ENCODE measurements at regions of chr3 and their contacts with region 1.

Region 1: DNA sequence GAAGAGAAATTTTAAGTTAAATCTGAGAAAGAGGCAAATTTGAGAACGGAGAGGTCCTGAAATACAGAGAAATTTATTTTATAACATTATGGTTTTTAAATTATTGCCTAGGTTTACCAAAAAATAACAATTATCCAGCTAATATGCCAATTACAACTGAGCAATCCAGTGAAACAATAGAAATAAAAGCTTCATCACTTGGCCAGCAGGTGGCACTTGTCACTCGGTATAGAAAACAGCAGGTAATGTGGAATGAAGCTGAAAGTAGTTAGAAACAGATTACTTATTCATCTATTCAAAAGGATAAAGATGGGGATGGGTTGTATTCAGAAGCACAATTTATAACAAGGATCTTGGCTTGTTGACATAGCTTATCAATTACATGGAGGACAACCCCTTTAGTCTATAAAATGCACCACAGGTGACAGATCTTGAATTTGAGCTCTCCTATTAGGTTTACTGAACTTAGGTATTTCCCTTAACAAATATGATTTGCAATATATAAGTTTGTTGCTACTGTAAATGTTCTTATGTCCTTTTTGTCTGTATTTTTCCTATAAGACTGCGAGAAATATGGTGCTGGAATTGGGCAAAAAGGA is 70.1 kb upstream of the GUCA1C start:
- DNase-seq: peak; percentile 57
- ATAC-seq: peak; percentile 28
- H3K4me3 ChIP-seq: no peak overlapping the region
- H3K4me3 Mint-ChIP-seq: no peak overlapping the region
- H3K27ac ChIP-seq: no peak overlapping the region
- H3K27ac Mint-ChIP-seq: no peak overlapping the region
- H3K4me1 ChIP-seq: no peaks in the 10 kb centered on the region
- H3K4me1 Mint-ChIP-seq: no peaks in the 10 kb centered on the region
- H3K27me3 ChIP-seq: no peaks in the 10 kb centered on the region
- H3K27me3 Mint-ChIP-seq: peaks cover 5% of the 10 kb centered on the region
- CTCF ChIP-seq: peak; percentile 88

Region 2: GRCh38 chr3:108970561-108970960 is 53.2 kb before region 1 on chr3:
- CTCF ChIA-PET with region 1: no interaction called
- POLR2A ChIA-PET with region 1: no interaction called
- intact Hi-C with region 1: no loop called
- DNase-seq: no peak
- ATAC-seq: no peak
- H3K4me3 ChIP-seq: no peak overlapping the region
- H3K4me3 Mint-ChIP-seq: no peak overlapping the region
- H3K27ac ChIP-seq: no peak overlapping the region
- H3K27ac Mint-ChIP-seq: no peak overlapping the region
- H3K4me1 ChIP-seq: no peaks in the 10 kb centered on the region
- H3K4me1 Mint-ChIP-seq: peaks cover 8% of the 10 kb centered on the region
- H3K27me3 ChIP-seq: no peaks in the 10 kb centered on the region
- H3K27me3 Mint-ChIP-seq: peaks cover 7% of the 10 kb centered on the region
- CTCF ChIP-seq: no peak

Region 3: DNA sequence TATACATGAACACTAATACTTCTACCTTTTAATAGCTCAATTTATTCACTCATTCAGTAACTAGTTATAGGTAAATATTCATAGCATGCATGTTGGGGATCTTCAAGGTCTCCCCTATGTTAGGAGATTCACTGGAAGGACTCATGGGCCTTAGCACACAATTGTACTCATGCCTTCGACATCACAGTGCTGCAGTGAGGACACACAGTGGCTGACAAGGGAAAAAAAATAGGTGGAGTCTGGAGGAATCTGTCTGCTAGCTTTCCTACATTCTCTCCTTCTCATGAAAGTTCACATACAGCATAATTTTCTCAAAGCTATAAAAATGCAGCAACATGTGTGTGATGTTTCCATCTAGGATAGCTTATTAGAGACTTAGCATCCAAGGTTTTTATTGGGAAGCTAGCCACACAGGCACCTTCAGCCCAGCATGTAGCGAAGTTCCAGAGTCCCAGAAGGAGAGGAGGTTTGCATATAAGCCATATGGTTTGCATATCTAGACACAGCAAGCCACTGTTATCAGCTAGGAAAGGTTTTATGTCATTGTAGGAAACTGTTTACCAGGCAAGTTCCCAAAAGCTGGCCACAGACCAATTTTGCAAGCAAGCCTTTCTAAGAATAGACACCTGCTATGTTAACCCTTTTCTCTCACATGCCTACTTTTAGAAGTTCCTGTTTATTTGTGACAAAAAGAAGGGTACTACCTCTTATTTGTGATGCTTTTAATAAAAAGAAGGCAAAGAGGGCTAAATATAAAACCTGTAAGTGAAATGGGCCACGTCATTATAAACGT is 47.8 kb after region 1 on chr3:
- CTCF ChIA-PET with region 1: interaction called, 10 read pairs
- POLR2A ChIA-PET with region 1: no interaction called
- intact Hi-C with region 1: no loop called
- DNase-seq: no peak
- ATAC-seq: no peak
- H3K4me3 ChIP-seq: no peak overlapping the region
- H3K4me3 Mint-ChIP-seq: no peak overlapping the region
- H3K27ac ChIP-seq: no peak overlapping the region
- H3K27ac Mint-ChIP-seq: no peak overlapping the region
- H3K4me1 ChIP-seq: peaks cover 10 to 11% of the 10 kb centered on the region in 2 donors
- H3K4me1 Mint-ChIP-seq: peaks cover 10% of the 10 kb centered on the region
- H3K27me3 ChIP-seq: peaks cover 0 to 5% (median 0%) of the 10 kb centered on the region in 4 experiments
- H3K27me3 Mint-ChIP-seq: peaks cover 28% of the 10 kb centered on the region
- CTCF ChIP-seq: no peak

Region 4: GRCh38 chr3:109081746-109082510 is 58.2 kb after region 1 on chr3:
- CTCF ChIA-PET with region 1: interaction called, 74 read pairs
- POLR2A ChIA-PET with region 1: no interaction called
- intact Hi-C with region 1: loop called (anchors 1 kb)
- DNase-seq: peak; percentile 71
- ATAC-seq: peak; percentile 72
- H3K4me3 ChIP-seq: no peak overlapping the region
- H3K4me3 Mint-ChIP-seq: no peak overlapping the region
- H3K27ac ChIP-seq: no peak overlapping the region
- H3K27ac Mint-ChIP-seq: no peak overlapping the region
- H3K4me1 ChIP-seq: peaks cover 0 to 3% of the 10 kb centered on the region in 2 donors
- H3K4me1 Mint-ChIP-seq: peaks cover 5% of the 10 kb centered on the region
- H3K27me3 ChIP-seq: no peaks in the 10 kb centered on the region
- H3K27me3 Mint-ChIP-seq: peaks cover 14% of the 10 kb centered on the region
- CTCF ChIP-seq: peak; percentile 72